Heart left ventricle (tissue), 16 donors: ENCODE measurements at regions of chr5 and their contacts with region 1.

Region 1: DNA sequence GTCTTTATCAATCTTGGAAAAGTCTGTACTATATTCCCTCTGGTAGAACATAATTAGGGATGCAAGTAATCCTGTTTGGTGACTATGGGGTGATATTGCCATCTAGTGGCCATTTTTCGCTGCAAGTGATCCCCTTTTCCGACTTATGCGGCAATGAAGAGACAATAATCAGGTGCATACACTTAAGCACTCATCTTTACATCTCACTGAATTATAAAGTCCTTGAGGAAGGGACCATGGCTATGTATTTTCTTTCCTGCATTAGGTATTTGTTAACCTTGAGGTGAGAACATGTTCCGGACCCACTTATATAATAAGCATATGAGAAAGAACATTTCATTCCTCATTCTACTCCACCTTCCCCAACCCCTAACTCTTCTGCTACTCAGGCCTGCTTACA is 19.6 kb upstream of the LIX1 start:
- DNase-seq: peak in 3 of 5 donors; percentile 33 to 59 (median 44)
- ATAC-seq: peak in 3 of 4 donors; percentile 71 to 77 (median 76)
- H3K4me3 ChIP-seq: no peak overlapping the region
- H3K27ac ChIP-seq: no peak overlapping the region
- H3K4me1 ChIP-seq: peaks cover 0 to 6% (median 0%) of the 10 kb centered on the region in 12 donors
- H3K27me3 ChIP-seq: no peaks in the 10 kb centered on the region
- CTCF ChIP-seq: peak; percentile 81 to 95 (median 89)
- POLR2A ChIP-seq: no peak

Region 2: DNA sequence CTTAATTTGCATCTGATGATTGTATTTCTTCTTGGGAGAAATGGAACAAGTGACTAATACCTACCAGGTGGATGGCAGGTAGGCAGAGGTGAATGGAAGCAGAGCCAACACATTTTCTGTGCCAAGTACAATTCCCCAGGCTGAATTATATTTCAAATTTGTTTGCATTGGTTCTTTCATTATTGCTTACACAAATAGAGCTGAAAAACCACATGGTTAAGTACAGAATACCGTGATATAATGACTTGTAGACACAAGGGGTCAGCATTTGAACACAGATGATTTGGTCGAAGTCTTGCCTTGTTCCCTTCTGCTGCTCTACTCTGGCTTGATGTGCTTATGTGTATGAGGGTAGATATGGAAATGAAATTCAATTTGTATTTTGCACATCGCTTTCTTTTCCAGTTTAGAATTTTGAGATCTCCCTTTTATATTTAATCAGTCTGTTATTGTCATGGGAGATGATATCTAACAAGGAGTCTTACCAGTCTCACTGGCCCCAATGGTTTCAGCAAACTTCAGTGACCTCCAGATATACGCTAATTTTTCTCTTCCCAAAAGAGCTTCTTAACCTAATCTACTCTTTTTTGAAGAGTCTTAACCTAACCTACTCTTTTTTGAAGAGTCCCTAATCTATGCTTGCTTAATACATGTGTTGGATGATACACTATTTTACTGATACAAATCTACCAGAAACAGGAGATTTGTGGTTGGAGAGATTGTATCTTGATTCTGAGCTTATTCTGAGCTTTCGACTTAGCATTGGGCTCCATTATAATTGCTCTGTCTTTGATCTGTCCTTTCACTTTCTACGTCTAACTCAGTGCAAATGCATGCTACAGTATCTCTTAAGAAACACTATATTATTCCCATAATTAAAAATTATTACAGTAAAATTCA is 817.1 kb before region 1 on chr5:
- intact Hi-C with region 1: loop called in 2 of 10 experiments (anchors 5 to 10 kb)
- DNase-seq: peak in 1 of 5 donors; percentile 18
- ATAC-seq: peak; percentile 76 to 93 (median 88)
- H3K4me3 ChIP-seq: no peak overlapping the region
- H3K27ac ChIP-seq: no peak overlapping the region
- H3K4me1 ChIP-seq: peaks cover 0 to 3% (median 0%) of the 10 kb centered on the region in 12 donors
- H3K27me3 ChIP-seq: no peaks in the 10 kb centered on the region
- CTCF ChIP-seq: peak; percentile 30 to 68 (median 58)
- POLR2A ChIP-seq: no peak

Region 3: GRCh38 chr5:96763026-96763425 is 399.0 kb before region 1 on chr5:
- intact Hi-C with region 1: loop called in 5 of 10 experiments (anchors 5 to 10 kb)
- DNase-seq: no peak
- ATAC-seq: no peak
- H3K4me3 ChIP-seq: no peak overlapping the region
- H3K27ac ChIP-seq: no peak overlapping the region
- H3K4me1 ChIP-seq: no peaks in the 10 kb centered on the region
- H3K27me3 ChIP-seq: no peaks in the 10 kb centered on the region
- CTCF ChIP-seq: no peak
- POLR2A ChIP-seq: no peak

Region 4: DNA sequence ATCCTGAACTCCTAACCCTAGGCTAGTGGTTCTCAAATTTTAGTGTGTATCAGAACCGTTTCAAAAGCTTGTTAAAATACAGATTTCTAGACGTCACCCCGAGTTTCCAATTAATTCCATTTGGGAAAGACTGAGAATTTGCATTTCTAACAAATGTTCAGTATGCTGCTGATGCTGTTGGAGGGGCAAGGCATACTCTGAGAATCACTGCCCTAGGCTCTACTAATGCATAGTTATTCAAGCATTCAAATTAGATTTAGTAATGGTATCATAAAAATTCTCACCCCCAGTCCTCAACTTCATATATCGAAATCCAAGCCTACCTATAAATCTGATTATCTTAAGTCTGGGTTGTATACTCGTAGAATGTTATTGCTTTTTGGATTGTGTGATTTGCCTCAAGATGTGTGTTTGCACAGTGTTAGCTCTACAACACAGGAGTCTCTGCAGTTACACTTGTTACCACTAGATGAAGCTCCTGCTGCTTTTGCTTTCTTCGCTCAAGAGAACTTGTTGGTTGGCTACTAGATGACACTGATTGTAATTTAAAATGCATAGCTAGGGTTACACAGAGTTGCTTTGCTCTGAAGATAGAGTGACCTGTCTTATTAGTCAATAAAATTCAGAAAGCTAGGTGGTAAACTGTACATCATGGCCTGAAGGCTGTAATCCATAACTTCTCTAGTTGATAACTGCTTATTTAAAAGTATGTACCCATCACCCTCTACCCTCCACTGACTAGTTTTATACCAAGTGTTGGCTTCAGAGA is 293.3 kb before region 1 on chr5:
- intact Hi-C with region 1: loop called (anchors 2 to 5 kb)
- DNase-seq: no peak
- ATAC-seq: peak; percentile 58 to 90 (median 82)
- H3K4me3 ChIP-seq: no peak overlapping the region
- H3K27ac ChIP-seq: no peak overlapping the region
- H3K4me1 ChIP-seq: no peaks in the 10 kb centered on the region
- H3K27me3 ChIP-seq: no peaks in the 10 kb centered on the region
- CTCF ChIP-seq: peak; percentile 82 to 94 (median 90)
- POLR2A ChIP-seq: no peak

Region 5: DNA sequence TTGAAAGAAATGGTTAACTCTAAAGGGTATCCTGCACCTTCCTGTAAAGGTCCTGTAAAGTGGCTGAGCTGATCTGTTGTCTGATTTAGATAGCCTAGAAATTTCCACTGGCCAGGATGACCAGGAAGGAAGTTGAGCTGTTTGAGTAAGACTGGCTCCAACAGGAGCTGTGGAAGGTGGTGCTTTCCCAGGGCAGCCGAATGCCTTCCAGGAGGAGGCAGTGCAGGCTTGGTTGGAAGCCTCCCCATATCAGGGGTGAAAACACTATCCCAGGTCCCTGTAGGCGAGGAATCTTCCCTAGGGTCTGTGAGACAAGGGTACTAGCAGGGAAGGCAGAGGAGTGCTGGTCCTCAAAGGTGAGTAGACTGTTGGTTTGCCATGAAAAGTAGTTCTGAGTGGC is 118.0 kb before region 1 on chr5:
- intact Hi-C with region 1: loop called in 2 of 10 experiments (anchors 5 kb)
- DNase-seq: peak in 4 of 5 donors; percentile 15 to 42 (median 26)
- ATAC-seq: peak; percentile 66 to 88 (median 84)
- H3K4me3 ChIP-seq: no peak overlapping the region
- H3K27ac ChIP-seq: no peak overlapping the region
- H3K4me1 ChIP-seq: peaks cover 0 to 6% (median 0%) of the 10 kb centered on the region in 12 donors
- H3K27me3 ChIP-seq: no peaks in the 10 kb centered on the region
- CTCF ChIP-seq: peak; percentile 28 to 62 (median 48)
- POLR2A ChIP-seq: no peak

Region 6: GRCh38 chr5:97242341-97242740 is 80.3 kb after region 1 on chr5:
- intact Hi-C with region 1: no loop called
- DNase-seq: no peak
- ATAC-seq: no peak
- H3K4me3 ChIP-seq: no peak overlapping the region
- H3K27ac ChIP-seq: no peak overlapping the region
- H3K4me1 ChIP-seq: no peaks in the 10 kb centered on the region
- H3K27me3 ChIP-seq: no peaks in the 10 kb centered on the region
- CTCF ChIP-seq: no peak
- POLR2A ChIP-seq: no peak